Left colon (tissue), 2 donors: ENCODE measurements at regions of chr4 and their contacts with region 1.

Region 1: DNA sequence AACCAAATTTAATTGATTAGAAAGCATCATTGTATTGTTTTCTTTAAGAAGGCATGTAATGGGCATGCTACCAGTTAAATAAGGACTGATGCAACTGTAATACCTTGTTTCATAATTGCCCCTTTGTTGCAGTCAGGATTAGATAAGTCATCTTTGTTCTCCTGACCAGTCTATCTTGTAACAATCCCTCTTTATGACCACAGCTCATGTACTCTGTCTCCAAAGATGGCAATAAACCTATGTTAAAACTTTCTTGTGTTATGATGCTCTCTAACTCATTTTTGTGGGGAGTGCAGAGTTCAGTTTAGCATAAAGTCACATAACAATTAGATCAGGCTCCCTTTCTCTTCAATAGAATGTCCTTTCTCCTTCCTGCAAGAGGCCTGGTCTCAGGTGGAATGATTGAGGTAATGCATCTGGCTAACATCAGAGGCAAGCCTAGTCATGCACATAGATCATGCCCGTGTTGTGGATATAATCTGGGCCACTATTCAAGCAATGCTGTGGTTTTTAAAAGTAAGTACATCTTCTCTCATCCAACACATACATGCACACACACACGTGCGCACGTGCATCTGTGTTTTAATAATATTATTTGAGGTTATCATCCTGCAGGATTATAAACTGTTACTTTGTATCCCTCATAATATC is 45.6 kb downstream of the TMEM154 start:
- DNase-seq: no peak
- ATAC-seq: peak; percentile 95

Region 2: GRCh38 chr4:152340818-152341217 is 293.4 kb before region 1 on chr4:
- intact Hi-C with region 1: no loop called
- DNase-seq: no peak
- ATAC-seq: no peak

Region 3: GRCh38 chr4:152515678-152516077 is 118.6 kb before region 1 on chr4:
- intact Hi-C with region 1: loop called in 1 of 2 experiments (anchors 10 kb)
- DNase-seq: no peak
- ATAC-seq: no peak